CD8-positive, alpha-beta T cell (primary cell): ENCODE measurements at regions of chr14 and their contacts with region 1.

Region 1: DNA sequence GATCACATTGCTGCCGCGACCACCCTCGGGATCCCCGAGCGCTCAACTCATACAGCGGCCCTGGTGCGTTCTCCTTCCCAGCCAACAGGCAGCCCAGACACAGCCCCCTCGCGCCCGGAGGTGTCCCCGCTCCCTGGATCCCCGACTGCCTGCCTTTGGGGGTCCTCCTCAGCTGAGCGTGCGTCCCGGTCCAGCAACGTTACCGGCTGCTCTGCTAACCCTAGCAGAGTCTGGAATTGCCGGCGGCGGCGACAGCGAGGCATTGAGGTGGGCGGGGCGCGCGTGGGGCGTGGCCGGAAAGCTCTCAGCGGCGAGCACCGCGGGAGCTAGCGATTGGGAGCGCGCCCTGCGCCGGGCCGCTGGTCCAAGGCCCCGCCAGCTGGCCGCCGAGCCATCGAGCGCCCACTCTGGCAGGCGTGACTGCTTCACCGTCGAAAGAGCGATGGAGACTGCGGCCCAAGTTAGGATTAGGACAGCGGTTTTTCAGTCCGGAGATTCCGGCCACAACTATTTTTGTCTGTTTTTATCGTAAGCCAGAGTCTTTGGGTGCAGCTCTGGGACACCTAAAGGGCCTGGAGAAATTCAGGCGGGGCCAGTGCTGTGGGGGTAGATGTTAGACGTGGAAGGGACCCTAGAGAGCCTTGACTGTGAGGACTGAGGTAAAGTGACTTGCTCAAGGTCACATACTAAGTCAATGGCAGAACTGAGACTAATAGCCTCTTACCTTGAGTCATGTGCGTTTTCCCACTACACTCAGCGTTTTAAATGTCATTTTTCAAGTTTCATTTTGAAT is at the start of gene HEATR5A:
- DNase-seq: peak; percentile 87 to 95 (median 93)
- ATAC-seq: peak; percentile 97
- H3K4me3 ChIP-seq: peak within 1 kb of the TSS; percentile 76 to 96
- H3K4me3 Mint-ChIP-seq: peak within 1 kb of the TSS; percentile 97
- H3K27ac ChIP-seq: peak within 1 kb of the TSS; percentile 63 to 71
- H3K27ac Mint-ChIP-seq: peak within 1 kb of the TSS; percentile 91
- H3K4me1 ChIP-seq: peaks cover 13% of the 10 kb centered on the region
- H3K4me1 Mint-ChIP-seq: peaks cover 25% of the 10 kb centered on the region
- H3K27me3 ChIP-seq: no peaks in the 10 kb centered on the region
- H3K27me3 Mint-ChIP-seq: no peaks in the 10 kb centered on the region
- CTCF ChIP-seq: no peak
- total RNA-seq, gene HEATR5A: 3.4 to 3.5 TPM

Region 2: DNA sequence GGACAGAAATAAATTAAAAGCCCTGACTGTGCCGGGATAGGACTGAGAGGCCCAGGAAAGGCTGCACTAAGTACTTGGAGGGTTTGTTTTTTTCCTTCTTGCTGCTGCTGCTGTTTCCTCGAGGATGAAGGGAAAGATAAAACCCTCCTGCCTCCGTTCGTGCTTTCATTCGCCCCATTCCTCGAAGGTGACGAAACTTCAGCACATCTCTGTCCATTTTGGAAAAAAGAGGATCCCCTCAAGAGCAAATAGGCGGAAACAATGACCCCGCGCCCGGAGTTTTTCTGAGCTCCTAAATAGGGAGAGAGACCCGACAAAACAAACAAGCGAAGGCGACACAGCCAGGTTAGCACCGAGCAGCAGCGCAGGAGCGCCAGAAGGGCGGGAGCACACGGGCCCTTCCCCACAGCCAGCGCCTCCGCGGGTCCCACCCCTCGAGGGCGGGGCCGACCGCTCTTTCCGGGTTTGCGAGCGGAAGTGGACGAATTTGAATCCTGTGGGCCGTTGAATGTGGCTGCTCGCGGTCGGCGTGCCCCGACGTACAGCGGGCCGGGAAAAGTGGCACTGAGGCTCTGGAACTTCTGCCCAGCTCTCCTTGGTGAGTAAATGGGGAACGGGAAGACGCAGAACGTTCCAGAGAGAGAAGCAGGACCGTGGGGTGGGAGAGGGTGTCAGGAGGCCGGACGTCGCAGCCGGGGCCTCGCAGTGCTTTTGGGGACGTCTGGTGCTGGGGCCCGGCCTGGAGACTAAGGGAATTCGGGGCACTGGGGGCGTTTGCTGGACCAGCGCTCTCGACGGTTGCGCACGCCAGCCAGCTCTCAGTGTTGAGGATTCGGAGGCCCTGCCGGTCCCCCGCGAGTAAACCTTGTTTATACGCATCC is 861.6 kb before region 1 on chr14 and contains the start of gene G2E3:
- CTCF ChIA-PET with region 1: no interaction called
- POLR2A ChIA-PET with region 1: no interaction called
- intact Hi-C with region 1: loop called in 1 of 2 experiments (anchors 5 kb)
- DNase-seq: peak; percentile 73 to 92 (median 84)
- ATAC-seq: peak; percentile 99
- H3K4me3 ChIP-seq: peak within 1 kb of the TSS; percentile 91 to 96
- H3K4me3 Mint-ChIP-seq: peak within 1 kb of the TSS; percentile 99
- H3K27ac ChIP-seq: peak within 1 kb of the TSS; percentile 83 to 86
- H3K27ac Mint-ChIP-seq: peak within 1 kb of the TSS; percentile 98
- H3K4me1 ChIP-seq: peaks cover 24% of the 10 kb centered on the region
- H3K4me1 Mint-ChIP-seq: peaks cover 37% of the 10 kb centered on the region
- H3K27me3 ChIP-seq: no peaks in the 10 kb centered on the region
- H3K27me3 Mint-ChIP-seq: no peaks in the 10 kb centered on the region
- CTCF ChIP-seq: no peak
- total RNA-seq, gene G2E3: 25.2 to 34.7 TPM

Region 3: GRCh38 chr14:31388687-31389413 is 31.7 kb before region 1 on chr14:
- CTCF ChIA-PET with region 1: no interaction called
- POLR2A ChIA-PET with region 1: no interaction called
- intact Hi-C with region 1: no loop called
- DNase-seq: no peak
- ATAC-seq: no peak
- H3K4me3 ChIP-seq: no peak overlapping the region
- H3K4me3 Mint-ChIP-seq: no peak overlapping the region
- H3K27ac ChIP-seq: no peak overlapping the region
- H3K27ac Mint-ChIP-seq: no peak overlapping the region
- H3K4me1 ChIP-seq: no peaks in the 10 kb centered on the region
- H3K4me1 Mint-ChIP-seq: no peaks in the 10 kb centered on the region
- H3K27me3 ChIP-seq: no peaks in the 10 kb centered on the region
- H3K27me3 Mint-ChIP-seq: no peaks in the 10 kb centered on the region
- CTCF ChIP-seq: no peak

Region 4: DNA sequence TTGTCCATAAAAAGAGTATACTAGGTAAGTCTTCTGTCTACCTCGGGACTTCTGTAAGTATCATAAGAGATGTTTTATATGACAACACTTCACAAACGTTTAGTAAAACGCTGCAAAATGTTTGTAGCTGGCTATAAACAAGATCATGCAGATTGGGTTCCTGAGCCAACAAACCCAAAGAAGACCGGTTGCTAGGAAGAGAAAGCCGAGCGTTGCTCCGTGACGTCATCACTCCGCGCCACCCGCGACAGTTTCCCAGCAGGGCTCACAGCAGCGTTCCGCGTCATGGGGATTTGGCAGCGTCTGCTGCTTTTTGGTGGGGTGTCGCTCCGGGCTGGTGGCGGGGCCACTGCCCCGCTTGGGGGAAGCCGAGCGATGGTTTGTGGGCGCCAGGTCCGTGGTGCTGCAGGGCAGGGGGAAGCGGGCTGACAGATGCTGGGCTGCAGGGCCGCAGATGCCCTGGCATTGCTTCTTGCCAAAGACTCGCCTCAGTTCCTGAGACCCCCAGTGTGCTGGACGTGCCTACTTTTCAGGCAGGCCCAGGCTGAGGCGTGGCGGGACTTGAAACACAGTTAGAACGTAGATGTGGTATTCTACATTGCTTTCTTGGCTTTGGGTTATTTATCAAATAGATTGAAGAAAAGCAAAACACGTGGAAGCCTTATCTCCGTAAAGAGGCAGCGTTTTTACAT is 140.8 kb after region 1 on chr14 and contains the start of gene NUBPL:
- CTCF ChIA-PET with region 1: no interaction called
- POLR2A ChIA-PET with region 1: interaction called, 3 read pairs
- intact Hi-C with region 1: loop called (anchors 1 kb)
- DNase-seq: peak; percentile 95 to 99 (median 98)
- ATAC-seq: peak; percentile 95
- H3K4me3 ChIP-seq: peak within 1 kb of the TSS; percentile 75 to 86
- H3K4me3 Mint-ChIP-seq: peak within 1 kb of the TSS; percentile 96
- H3K27ac ChIP-seq: peak within 1 kb of the TSS; percentile 82 to 86
- H3K27ac Mint-ChIP-seq: peak within 1 kb of the TSS; percentile 98
- H3K4me1 ChIP-seq: peaks cover 18% of the 10 kb centered on the region
- H3K4me1 Mint-ChIP-seq: peaks cover 35% of the 10 kb centered on the region
- H3K27me3 ChIP-seq: no peaks in the 10 kb centered on the region
- H3K27me3 Mint-ChIP-seq: peaks cover 4% of the 10 kb centered on the region
- CTCF ChIP-seq: no peak
- total RNA-seq, gene NUBPL: 4.7 to 7.5 TPM